ENCODE measurements at regions of chr13 and their contacts with region 1.

Region 1: DNA sequence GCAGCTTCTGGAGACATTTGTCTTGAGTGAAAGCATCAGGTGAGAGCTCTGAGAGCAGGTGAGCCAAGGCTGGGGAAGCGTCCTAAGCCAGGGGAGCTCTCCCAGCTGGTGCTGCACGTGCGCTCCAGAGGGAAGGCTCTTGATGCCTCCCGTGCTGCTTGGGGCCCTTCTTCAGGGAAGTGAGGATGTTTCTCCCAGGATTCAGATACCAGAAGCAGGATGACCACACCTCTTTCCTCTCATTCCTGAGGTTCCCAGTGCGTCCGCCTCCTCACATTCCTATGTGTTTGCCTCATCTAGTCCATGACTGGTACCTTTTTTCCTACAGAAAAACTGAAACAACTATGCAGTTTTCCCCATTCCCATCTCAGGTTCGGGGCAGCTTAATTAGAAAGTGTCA is 231.0 kb upstream of the IRS2 start:
- DNase-seq: peak; percentile 88
- ATAC-seq: peak; percentile 81
- H3K4me3 ChIP-seq: no peak overlapping the region; the same call in 1 of the 2 replicates
- H3K27ac ChIP-seq: peak overlapping the region; percentile 99
- H3K4me1 ChIP-seq: peaks cover 60% of the 10 kb centered on the region
- H3K27me3 ChIP-seq: no peaks in the 10 kb centered on the region
- CTCF ChIP-seq: no peak

Region 2: DNA sequence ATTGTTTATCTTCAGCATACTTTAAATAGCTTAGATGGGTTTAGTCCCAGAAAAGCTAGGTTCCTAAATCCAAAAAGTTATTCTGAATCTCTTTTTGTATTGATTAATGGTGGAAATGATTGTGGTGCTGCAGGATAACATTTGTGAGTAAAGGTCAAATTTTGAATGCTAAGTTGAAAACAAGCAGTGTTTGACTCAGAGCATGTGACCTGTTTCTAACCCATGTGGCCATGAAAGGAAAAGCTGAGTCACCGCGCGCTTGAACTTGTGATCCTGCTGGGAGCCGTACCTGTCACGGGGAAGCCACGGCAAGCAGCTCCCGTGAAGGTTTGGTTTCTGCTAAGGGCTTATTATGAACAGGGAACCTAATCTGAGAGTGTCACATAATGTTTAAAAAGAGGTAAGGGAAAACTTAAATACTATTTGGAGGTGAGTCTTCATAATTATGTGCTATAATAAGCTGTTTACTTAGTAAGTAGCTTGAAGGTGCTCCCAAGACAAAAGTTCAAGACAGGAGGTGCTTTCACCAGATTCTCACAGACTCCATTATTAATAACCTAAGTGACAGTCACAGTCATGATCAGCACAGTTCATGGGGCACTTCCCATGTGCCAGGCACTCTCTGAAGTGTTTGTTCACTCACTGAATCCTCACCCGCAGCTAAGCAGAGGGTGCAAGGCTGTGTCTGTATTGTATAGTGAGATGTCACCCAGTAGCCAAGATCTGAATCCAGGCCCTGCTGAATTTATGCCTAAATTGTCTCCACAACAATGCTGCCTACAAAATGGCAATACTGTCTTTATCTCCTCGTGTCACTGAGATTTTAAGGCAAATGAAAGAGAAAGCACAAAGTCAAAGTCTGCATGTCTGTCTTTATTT is 1101.5 kb before region 1 on chr13:
- CTCF ChIA-PET with region 1: no interaction called
- POLR2A ChIA-PET with region 1: no interaction called
- intact Hi-C with region 1: loop called (anchors 5 kb)
- DNase-seq: peak; percentile 86
- ATAC-seq: peak; percentile 60
- H3K4me3 ChIP-seq: peak overlapping the region; percentile 53
- H3K27ac ChIP-seq: peak overlapping the region; percentile 73
- H3K4me1 ChIP-seq: peaks cover 51% of the 10 kb centered on the region
- H3K27me3 ChIP-seq: no peaks in the 10 kb centered on the region
- CTCF ChIP-seq: no peak

Region 3: GRCh38 chr13:109256866-109257760 is 760.3 kb before region 1 on chr13:
- CTCF ChIA-PET with region 1: no interaction called
- POLR2A ChIA-PET with region 1: no interaction called
- intact Hi-C with region 1: loop called (anchors 10 kb)
- DNase-seq: peak; percentile 93
- ATAC-seq: peak; percentile 88
- H3K4me3 ChIP-seq: no peak overlapping the region
- H3K27ac ChIP-seq: peak overlapping the region; percentile 85
- H3K4me1 ChIP-seq: peaks cover 32% of the 10 kb centered on the region
- H3K27me3 ChIP-seq: no peaks in the 10 kb centered on the region
- CTCF ChIP-seq: no peak

Region 4: DNA sequence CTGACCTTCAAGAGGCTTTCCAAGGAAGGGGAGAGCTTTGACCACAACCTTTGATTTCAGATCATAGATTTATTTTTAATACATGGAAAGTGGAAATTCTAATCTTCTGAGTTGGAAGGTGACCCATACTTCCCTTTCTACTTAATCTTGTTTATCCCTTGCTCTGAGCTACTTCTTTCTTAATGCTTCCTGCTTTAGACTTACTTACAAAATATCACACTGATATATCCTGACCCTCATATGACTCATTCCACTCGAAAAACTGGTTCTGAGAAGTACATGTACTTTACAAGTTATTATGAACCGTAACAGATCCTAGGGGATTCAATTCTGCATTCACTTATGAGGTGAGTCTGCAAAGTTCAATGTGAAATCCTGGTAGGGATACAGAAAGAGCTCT is 154.8 kb before region 1 on chr13:
- CTCF ChIA-PET with region 1: no interaction called
- POLR2A ChIA-PET with region 1: no interaction called
- intact Hi-C with region 1: loop called (anchors 5 kb)
- DNase-seq: peak; percentile 89
- ATAC-seq: peak; percentile 91
- H3K4me3 ChIP-seq: peak overlapping the region; percentile 32; the same call in 1 of the 2 replicates
- H3K27ac ChIP-seq: peak overlapping the region; percentile 44
- H3K4me1 ChIP-seq: peaks cover 24% of the 10 kb centered on the region
- H3K27me3 ChIP-seq: no peaks in the 10 kb centered on the region
- CTCF ChIP-seq: no peak

Region 5: DNA sequence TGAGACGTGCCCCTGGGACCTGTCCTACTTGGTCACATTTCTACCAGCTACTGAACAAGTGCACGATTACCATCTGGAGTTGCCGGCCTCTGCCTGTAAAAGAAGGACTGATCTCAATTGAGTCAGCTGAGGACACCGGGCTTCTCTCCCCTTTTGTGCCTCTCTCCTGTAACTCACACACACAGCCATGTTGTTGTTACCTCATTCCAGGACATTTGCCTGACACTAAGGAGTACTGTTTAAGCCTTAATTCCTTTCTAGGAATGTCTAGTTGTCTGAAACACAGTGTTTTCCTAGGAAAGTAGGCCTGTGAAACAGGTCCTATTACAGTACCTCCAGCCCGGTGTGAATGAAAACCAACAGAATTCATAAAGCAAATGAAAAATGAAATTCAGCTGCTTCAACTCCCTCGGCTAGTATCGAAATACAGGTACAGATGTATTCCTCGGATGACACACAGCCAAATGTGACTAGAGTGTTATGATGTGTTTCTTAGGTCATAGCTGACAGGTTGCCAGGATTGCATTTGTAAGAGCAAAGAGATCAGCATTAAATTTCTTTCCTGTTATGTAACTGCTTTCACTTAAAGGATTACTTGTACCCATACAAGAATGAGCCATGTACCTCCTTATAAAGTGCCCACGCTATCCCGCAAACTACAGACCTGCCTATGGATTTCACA is 79.0 kb before region 1 on chr13:
- CTCF ChIA-PET with region 1: no interaction called
- POLR2A ChIA-PET with region 1: no interaction called
- intact Hi-C with region 1: loop called (anchors 5 kb)
- DNase-seq: peak; percentile 65
- ATAC-seq: peak; percentile 64; the same call in 1 of the 2 replicates
- H3K4me3 ChIP-seq: no peak overlapping the region
- H3K27ac ChIP-seq: no peak overlapping the region
- H3K4me1 ChIP-seq: peaks cover 11% of the 10 kb centered on the region
- H3K27me3 ChIP-seq: no peaks in the 10 kb centered on the region
- CTCF ChIP-seq: no peak

Region 6: DNA sequence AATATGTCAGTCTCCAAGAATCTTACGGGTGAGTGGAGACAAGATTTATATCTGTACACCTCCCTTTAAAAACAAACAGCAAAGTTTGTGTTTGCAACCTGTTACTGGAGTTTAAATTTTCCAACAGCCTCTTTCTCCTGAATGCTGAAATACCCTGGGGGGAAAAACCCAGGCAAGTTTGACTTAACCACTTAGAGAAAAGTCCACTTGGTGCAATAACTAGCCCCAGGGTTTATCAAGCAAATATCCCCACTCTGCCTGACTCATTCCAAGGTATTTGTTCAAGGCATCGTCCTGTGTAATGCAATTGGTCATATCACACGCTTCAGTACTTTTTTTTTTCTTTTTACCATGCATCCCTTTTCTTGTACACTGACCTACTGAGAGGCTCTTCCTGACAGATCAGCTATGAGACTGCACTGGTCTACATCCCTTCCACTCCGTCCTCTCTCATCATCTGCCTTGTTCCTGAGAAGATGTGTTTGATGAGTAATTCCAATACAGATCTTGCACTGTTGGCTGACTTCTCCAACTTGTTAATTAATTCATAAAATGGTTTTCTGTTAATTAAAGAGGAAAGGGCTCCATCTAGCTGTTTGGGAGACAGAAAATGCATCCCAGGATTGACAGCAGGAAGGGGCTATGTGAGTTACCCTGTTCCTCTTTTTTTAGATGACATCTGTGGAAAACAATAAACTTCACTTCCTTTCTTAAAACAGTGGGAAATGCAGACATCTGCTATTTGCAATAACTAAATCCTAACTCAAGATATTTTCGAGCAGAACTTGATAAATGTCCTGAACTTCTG is 18.4 kb before region 1 on chr13:
- CTCF ChIA-PET with region 1: no interaction called
- POLR2A ChIA-PET with region 1: no interaction called
- intact Hi-C with region 1: loop called (anchors 2 kb)
- DNase-seq: peak; percentile 97
- ATAC-seq: peak; percentile 85
- H3K4me3 ChIP-seq: no peak overlapping the region
- H3K27ac ChIP-seq: peak overlapping the region; percentile 74
- H3K4me1 ChIP-seq: peaks cover 52% of the 10 kb centered on the region
- H3K27me3 ChIP-seq: no peaks in the 10 kb centered on the region
- CTCF ChIP-seq: 0 out of 2 replicates have a peak, but pooled peaks have one; percentile 30

Region 7: DNA sequence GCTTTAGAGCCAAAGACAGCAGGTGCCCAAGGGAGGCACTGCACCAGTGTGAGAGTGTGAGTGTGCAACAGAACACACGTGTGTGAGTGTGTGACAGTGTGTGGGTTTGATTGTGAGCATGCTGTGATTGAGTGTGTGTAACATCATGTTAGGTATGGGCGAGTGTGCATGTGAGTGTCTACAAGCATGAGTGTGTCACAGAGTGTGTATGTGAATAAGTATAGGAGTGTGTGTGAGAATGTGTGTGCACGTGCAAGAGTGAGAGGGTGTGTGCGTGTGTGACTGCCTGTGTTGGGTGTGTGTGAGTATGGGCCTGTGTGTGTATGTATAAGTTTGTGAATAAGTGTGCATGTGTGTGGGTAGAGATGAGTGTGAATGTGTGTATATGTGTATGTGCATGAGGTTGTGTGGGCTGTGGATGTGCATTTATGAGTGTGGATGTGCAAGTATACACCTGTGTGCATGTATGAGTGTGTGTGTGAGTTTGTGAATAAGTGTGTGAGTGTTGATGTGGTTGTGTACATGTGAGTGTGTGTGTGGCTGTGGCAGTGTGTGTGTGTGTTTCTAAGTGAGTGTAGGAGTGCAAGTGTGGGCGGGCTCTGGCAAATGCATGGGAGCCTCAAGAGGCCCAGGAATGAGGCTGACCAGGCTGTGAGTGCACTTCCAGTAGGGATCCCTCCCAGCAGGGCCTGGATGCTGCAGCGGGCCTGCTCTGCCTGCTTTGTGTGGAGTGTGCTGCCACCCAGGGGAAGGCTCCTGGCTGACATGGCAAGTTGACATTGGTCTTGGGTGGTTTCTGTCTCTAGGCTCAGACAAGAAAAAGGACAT is 91.2 kb after region 1 on chr13:
- CTCF ChIA-PET with region 1: no interaction called
- POLR2A ChIA-PET with region 1: no interaction called
- intact Hi-C with region 1: loop called (anchors 1 kb)
- DNase-seq: peak; percentile 80
- ATAC-seq: peak; percentile 91
- H3K4me3 ChIP-seq: no peak overlapping the region
- H3K27ac ChIP-seq: no peak overlapping the region
- H3K4me1 ChIP-seq: peaks cover 14% of the 10 kb centered on the region
- H3K27me3 ChIP-seq: no peaks in the 10 kb centered on the region
- CTCF ChIP-seq: peak; percentile 78

Measured in PC-3 (cell line).